ENCODE measurements at regions of chr11 and their contacts with region 1.

Region 1: GRCh38 chr11:108222686-108223448 is at the start of gene ATM:
- DNase-seq: peak; percentile 98 to 100 (median 99)
- H3K4me3 ChIP-seq: peak within 1 kb of the TSS; percentile 67 to 98 (median 89)
- H3K27ac ChIP-seq: peak within 1 kb of the TSS; percentile 73 to 99 (median 94)
- H3K27me3 ChIP-seq: no peaks in the 10 kb centered on the region
- CTCF ChIP-seq: peak in 55 of 56 donors; percentile 52 to 89 (median 77)
- total RNA-seq, gene ATM: 65.2 to 179 (median 100) TPM

Region 2: DNA sequence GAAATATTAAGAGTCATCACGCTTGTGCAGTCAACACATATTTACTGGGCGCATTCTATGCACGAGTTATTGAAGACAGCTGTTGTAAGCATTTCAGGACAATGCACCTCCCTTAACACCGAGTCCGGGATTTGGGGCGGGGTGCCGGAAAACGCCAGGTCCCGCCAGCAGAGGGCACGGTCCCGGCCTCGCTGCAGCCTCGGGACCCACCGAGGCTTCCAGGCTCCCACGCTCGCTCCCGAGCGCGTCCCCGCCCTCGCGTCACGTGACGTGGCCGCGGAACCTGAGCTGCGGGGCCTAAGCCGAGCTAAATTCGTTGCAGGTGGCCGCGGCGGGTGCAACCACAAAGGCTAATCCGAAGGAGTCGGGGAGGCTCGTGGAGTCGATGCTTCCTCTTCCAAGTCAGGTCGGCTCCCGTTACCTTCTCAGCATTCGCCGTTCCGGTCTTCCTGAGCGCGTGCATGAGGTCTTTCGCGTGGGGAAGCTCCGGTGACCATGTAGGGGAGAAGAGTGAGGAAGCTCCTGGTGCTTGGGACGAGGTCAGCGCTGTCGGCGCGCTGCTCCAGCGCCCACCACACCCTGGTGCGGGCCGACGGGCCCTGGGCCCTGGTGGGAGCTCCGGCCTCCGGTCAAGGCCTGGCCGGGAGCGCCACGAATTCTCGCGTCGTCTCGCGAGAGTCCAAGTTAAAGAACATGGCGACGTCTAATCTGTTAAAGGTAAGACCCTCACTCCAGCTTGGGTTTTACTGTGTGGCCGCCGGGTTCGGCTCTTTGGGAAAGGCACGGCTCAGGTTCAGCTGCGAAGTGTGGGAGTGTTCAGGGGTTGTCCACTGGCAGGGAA is 214.0 kb before region 1 on chr11 and contains the start of gene CUL5:
- intact Hi-C with region 1: loop called (anchors 2 kb)
- DNase-seq: peak; percentile 82 to 95 (median 86)
- H3K4me3 ChIP-seq: peak within 1 kb of the TSS; percentile 62 to 100 (median 95)
- H3K27ac ChIP-seq: peak within 1 kb of the TSS; percentile 71 to 99 (median 96)
- H3K27me3 ChIP-seq: no peaks in the 10 kb centered on the region
- CTCF ChIP-seq: peak; percentile 72 to 96 (median 87)
- total RNA-seq, gene CUL5: 36.6 to 65.6 (median 52.0) TPM

Region 3: GRCh38 chr11:108121274-108122155 is 101.4 kb before region 1 on chr11 and contains the start of gene ACAT1:
- intact Hi-C with region 1: loop called (anchors 5 kb)
- DNase-seq: peak; percentile 92 to 98 (median 94)
- H3K4me3 ChIP-seq: peak within 1 kb of the TSS; percentile 61 to 96 (median 86)
- H3K27ac ChIP-seq: peak within 1 kb of the TSS; percentile 43 to 97 (median 90)
- H3K27me3 ChIP-seq: no peaks in the 10 kb centered on the region
- CTCF ChIP-seq: peak in 48 of 56 donors; percentile 10 to 67 (median 46)
- total RNA-seq, gene ACAT1: 44.7 to 96.1 (median 72.4) TPM

Region 4: DNA sequence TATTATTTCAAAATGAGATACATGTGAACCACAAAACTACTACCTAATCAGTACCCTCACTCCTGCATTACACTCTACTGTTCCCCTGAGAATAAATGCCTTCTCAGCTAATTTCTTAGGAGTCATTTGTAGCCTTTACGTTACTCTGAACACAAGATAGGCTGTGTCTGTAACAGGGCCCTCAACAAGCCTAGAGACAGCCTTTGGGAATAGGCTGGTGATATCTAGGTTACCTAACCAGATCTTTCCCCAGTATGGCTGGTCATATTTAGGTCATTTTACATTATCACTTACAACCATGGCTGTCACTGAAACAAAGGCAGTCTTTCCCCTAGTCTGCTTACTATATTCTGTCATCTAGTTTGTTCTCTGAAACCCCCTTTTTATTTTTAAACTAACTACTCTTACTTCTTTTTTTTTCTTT is 14.2 kb after region 1 on chr11:
- intact Hi-C with region 1: no loop called
- DNase-seq: no peak
- H3K4me3 ChIP-seq: no peak overlapping the region
- H3K27ac ChIP-seq: peak overlapping the region in 4 of 59 donors; percentile 8 to 61 (median 26)
- H3K27me3 ChIP-seq: no peaks in the 10 kb centered on the region
- CTCF ChIP-seq: no peak

Region 5: DNA sequence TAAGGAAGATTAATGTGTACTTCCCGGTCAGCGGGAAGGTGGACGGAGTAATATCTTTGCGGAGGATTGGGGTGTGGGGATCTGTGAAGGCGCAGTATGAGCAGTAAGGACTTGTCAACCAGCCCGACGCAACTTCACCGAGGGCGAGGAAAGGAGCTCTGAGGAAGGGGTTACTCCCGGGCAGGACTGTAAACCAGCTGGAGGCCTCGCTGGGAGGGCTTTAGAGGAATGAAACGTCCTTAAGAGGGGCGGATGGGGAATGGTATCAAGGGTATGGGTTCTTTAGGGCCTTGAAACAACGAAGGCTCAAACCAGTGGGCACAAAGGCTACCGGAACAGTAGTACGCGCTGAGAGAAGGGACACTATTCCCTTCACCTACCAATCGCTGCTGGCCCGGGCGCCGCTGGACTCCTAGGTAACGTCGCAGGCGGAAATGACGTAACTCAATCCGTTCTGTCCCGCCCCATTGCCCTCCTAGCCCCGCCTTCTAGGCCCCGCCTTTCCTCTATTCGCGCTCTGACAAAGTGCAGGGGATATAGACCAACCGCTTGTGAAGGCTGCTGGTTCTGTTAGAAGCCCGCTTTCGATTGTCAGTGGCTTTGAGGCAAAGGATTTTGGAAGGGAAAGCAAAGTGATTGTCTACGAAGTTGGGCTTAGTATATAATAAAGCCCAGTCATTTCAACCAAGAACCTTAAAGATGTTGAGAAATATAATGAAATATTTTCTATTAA is 244.4 kb after region 1 on chr11 and contains the start of gene C11orf65:
- intact Hi-C with region 1: loop called (anchors 2 to 5 kb)
- DNase-seq: peak; percentile 94 to 99 (median 96)
- H3K4me3 ChIP-seq: peak within 1 kb of the TSS; percentile 56 to 95 (median 78)
- H3K27ac ChIP-seq: peak within 1 kb of the TSS; percentile 31 to 99 (median 94)
- H3K27me3 ChIP-seq: no peaks in the 10 kb centered on the region
- CTCF ChIP-seq: peak in 12 of 56 donors; percentile 1 to 35 (median 20)
- total RNA-seq, gene C11orf65: 0.21 to 4.2 (median 1.4) TPM in 113 of 120 experiments, not detected in the others

Region 6: DNA sequence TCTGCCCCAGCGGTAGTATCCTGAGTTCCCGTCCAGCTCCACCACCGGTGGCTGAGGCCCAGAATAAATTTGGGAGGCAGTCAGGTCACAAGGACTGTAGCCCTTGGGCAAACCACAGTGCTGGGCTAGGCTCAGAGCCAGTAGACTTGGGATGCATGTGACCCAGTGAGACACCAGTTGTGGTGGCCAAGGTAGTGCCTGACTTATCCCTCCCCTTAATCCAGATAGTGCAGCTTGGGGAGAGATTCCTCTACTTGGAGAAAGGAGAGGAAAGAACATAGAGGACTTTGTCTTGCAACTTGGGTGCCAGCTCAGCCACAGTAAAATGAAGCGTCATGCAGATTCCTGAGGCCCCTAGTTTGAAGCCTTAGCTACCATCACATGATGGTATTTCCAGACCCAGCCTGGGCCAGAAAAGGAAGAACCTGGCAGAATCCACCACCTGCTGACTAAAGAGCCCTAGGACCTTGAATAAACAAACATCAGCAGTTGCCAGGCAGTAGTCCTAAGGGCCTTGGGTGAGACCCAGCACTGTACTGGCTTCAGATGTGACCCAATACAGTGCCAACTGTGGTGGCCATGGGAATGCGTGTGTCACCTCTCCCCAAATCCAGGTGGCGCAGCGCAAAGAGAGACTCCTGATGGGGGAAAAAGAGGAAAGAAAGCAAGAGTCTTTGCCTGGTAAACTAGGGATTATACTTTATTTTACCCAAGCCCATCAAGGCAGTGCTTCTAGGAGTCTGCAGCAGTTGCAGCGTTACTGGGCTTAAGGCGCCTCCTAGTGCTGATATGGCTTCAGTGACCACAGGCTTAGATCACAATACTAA is 425.0 kb after region 1 on chr11:
- intact Hi-C with region 1: loop called in 1 of 2 experiments (anchors 5 kb)
- DNase-seq: peak in 8 of 10 donors; percentile 28 to 69 (median 63)
- H3K4me3 ChIP-seq: peak overlapping the region in 1 of 59 donors; percentile 11
- H3K27ac ChIP-seq: peak overlapping the region in 18 of 59 donors; percentile 7 to 61 (median 26)
- H3K27me3 ChIP-seq: no peaks in the 10 kb centered on the region
- CTCF ChIP-seq: peak; percentile 24 to 82 (median 68)

Region 7: DNA sequence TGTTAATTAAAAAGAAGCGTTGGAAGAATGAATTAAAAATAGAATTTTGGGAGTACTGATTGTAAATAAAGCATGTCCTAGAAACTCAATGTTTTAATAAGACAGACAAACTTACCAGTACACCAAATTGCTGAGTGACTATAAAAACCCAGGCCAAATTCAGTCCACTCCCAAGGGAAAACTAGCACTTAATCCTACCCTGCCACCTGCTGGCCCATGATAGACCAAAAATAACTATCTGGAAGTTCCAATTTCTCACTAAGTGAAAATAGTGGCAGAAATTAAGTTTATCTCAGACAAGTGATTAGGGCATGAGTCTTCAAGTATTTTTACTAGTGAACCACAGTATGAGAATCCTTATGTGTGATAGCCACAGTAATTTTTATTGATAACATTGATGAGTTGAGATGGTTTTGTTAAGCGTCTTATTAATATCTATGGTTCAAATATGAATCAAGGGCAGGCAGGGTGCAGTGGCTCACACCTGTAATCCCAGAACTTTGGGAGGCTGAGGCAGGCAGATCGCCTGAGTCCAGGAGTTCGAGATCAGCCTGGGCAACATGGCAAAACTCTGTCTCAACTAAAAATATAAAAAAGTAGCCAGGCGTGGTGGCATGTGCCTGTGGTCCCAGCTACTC is 432.2 kb after region 1 on chr11:
- intact Hi-C with region 1: loop called in 1 of 2 experiments (anchors 5 kb)
- DNase-seq: peak in 1 of 10 donors; percentile 36
- H3K4me3 ChIP-seq: no peak overlapping the region
- H3K27ac ChIP-seq: no peak overlapping the region
- H3K27me3 ChIP-seq: no peaks in the 10 kb centered on the region
- CTCF ChIP-seq: peak in 55 of 56 donors; percentile 27 to 75 (median 48)

Region 8: DNA sequence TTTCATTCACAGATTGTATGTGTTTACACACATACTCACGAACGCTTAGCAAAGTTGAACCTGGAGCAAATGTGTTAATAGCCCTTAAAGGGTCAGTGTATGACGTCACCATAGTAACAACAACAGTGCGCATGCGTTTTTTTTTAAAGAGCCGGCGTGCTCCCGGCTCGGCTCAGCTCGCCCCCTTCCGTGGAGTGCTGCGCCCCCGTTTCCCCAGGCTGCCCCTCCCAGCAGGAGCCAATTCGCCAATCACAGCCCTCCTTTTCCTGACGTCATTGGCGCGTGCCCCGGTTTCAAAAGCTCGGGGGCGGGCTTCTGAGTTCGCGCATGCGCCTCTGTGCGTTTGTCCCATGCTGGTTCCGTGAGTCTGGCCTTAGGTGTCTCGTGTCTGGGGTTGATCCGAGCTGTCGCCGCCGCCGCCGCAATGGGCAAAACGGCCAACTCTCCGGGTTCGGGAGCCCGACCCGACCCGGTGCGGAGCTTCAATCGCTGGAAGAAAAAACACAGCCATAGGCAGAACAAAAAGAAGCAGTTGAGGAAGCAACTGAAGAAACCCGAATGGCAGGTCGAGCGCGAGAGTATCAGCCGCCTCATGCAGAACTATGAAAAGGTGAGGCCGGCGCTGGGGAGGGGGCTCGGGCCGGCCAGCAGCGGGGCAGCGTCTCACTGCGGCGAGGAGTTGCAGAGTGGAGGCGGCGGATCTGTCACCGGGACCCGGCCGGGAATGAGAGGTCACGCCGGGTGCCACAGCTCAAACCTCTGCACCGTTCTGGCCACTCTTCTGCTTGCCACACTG is 442.1 kb after region 1 on chr11 and contains the start of gene DDX10:
- intact Hi-C with region 1: loop called in 1 of 2 experiments (anchors 2 kb)
- DNase-seq: peak; percentile 96 to 98 (median 97)
- H3K4me3 ChIP-seq: peak within 1 kb of the TSS; percentile 70 to 100 (median 92)
- H3K27ac ChIP-seq: peak within 1 kb of the TSS in 44 of 59 donors; percentile 26 to 85 (median 65)
- H3K27me3 ChIP-seq: no peaks in the 10 kb centered on the region
- CTCF ChIP-seq: peak in 53 of 56 donors; percentile 11 to 69 (median 42)
- total RNA-seq, gene DDX10: 20.8 to 50.0 (median 34.1) TPM